Tibial artery (tissue), 4 donors: ENCODE measurements at regions of chr17 and their contacts with region 1.

Region 1: GRCh38 chr17:67824735-67825626 is at the start of gene BPTF:
- DNase-seq: peak; percentile 86 to 95
- H3K4me3 ChIP-seq: peak within 1 kb of the TSS; percentile 86
- H3K27ac ChIP-seq: peak within 1 kb of the TSS; percentile 94 to 99
- H3K4me1 ChIP-seq: peaks cover 0 to 36% (median 24%) of the 10 kb centered on the region in 4 donors
- H3K27me3 ChIP-seq: no peaks in the 10 kb centered on the region
- CTCF ChIP-seq: peak; percentile 96 to 99

Region 2: DNA sequence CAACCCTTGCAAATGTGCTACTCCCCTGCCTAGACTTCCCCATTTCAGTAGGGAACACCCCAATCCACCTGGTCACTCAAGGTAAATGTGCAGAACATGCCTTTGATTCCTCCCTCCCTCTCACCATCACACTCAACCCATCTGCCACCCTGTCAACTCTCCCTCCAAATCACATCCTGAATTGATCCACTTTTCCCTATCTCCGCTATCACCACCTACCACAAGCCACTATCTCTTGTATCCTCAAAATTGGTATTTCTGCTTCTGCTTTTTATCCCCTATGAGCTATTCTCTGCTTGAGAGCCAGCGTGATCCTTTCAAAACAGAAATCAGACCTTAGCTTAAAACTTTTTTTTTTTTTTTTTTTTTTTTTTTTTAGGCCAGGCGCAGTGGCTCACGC is 112.6 kb before region 1 on chr17:
- intact Hi-C with region 1: loop called (anchors 5 kb)
- DNase-seq: no peak
- H3K4me3 ChIP-seq: no peak overlapping the region
- H3K27ac ChIP-seq: no peak overlapping the region
- H3K4me1 ChIP-seq: peaks cover 0 to 6% (median 0%) of the 10 kb centered on the region in 4 donors
- H3K27me3 ChIP-seq: no peaks in the 10 kb centered on the region
- CTCF ChIP-seq: no peak

Region 3: GRCh38 chr17:68035523-68036303 is 210.7 kb after region 1 on chr17 and contains the start of gene KPNA2:
- intact Hi-C with region 1: loop called (anchors 5 kb)
- DNase-seq: peak; percentile 92 to 95
- H3K4me3 ChIP-seq: peak within 1 kb of the TSS; percentile 89 to 96
- H3K27ac ChIP-seq: peak within 1 kb of the TSS; percentile 63 to 73
- H3K4me1 ChIP-seq: peaks cover 0 to 16% (median 8%) of the 10 kb centered on the region in 4 donors
- H3K27me3 ChIP-seq: no peaks in the 10 kb centered on the region
- CTCF ChIP-seq: no peak